ENCODE measurements at regions of chrX and their contacts with region 1.

Region 1: DNA sequence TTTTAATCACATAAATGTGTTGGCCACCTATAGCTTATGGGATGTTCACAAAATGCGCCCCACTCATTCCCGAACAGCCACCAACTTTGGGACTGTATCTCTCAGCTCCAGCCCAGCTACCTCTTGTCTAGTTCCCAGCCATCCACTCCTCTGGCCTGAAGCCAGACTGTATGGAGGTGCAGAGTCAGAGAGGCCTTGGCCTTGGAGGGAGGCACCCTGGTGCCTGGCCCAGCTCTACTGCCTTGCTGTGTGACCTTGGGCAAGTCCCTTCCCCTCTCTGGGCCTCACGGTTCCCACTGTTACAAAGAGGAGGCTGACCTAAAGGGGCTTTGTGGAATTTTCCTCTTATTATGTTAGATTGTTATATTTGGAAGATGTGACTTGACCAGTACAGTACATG is 13.9 kb downstream of the MAMLD1 start:
- DNase-seq: no peak
- H3K4me3 ChIP-seq: no peak overlapping the region
- H3K27ac ChIP-seq: no peak overlapping the region
- H3K4me1 ChIP-seq: no peaks in the 10 kb centered on the region
- H3K27me3 ChIP-seq: no peaks in the 10 kb centered on the region
- CTCF ChIP-seq: no peak

Region 2: GRCh38 chrX:150162141-150162540 is 214.9 kb before region 1 on chrX:
- CTCF ChIA-PET with region 1: no interaction called
- POLR2A ChIA-PET with region 1: no interaction called
- intact Hi-C with region 1: no loop called
- DNase-seq: peak; percentile 22 to 62
- H3K4me3 ChIP-seq: no peak overlapping the region
- H3K27ac ChIP-seq: no peak overlapping the region
- H3K4me1 ChIP-seq: peaks cover 6% of the 10 kb centered on the region
- H3K27me3 ChIP-seq: no peaks in the 10 kb centered on the region
- CTCF ChIP-seq: no peak

Region 3: DNA sequence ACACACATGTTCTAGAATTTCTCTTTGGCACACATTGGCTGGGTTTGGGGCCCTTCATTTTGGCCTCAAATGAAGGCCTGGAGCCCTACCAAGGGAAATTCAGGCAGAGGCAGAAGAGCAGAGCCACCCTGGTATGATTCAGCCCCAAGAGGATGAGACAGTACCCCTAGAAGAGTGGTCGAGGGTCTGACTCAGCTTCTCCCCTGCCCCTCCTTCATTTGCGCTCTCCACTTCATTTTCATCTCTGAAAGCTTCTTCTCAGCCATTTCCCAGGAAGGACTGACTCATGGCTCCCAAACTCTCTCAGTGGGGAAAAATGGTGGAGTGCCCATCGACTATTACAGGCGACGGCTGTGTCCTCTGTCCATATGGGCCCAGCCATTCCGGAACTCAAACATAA is 29.6 kb after region 1 on chrX:
- CTCF ChIA-PET with region 1: interaction called, 10 read pairs
- POLR2A ChIA-PET with region 1: interaction called, 5 read pairs
- intact Hi-C with region 1: no loop called
- DNase-seq: no peak
- H3K4me3 ChIP-seq: no peak overlapping the region
- H3K27ac ChIP-seq: no peak overlapping the region
- H3K4me1 ChIP-seq: no peaks in the 10 kb centered on the region
- H3K27me3 ChIP-seq: no peaks in the 10 kb centered on the region
- CTCF ChIP-seq: no peak